Activated CD8-positive, alpha-beta T cell treated with anti-CD3 and anti-CD28 coated beads, Interleukin-2, amount 10 ng/mL, durations not matched to agents 7 days and 5 days (primary cell): ENCODE measurements at regions of chr5 and their contacts with region 1.

Region 1: DNA sequence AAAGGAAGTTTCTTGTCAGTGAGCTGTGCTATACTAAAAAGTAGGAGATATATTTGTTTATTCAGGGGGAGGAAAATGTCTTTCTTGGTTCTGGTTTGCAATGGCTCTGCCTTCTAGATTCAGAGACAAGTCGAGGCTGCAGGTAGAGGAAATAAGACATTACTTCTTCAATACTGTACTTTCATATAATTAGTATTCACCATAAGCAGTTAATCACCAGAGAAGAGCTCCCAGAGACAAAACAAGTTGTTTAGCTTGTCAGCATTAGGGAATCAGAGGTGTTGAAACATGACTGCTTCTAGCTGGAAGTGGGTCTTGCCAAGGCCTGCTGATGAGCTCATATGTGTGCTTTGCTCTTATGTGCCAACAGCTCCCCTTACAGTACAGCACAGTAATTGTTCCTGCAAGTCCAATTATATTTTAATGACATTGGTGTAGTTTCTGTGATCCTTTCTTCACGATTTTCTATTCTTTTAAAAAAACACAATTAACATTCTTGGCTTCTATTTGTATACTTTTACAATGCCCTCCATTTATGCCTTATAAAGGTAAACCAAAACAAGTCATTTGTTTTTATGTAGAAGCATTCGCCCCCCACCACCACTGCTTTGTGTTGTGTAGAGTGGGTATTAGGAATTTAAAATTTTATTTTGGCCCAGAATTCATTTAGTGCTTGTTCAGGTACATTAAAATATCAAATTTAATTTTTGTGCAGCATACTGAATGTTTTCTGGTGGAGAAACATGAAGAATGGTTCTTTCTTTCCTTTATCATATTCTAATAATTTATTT is 112.2 kb downstream of the RPS23 start:
- DNase-seq: peak; percentile 55
- ATAC-seq: peak; percentile 80
- H3K4me3 Mint-ChIP-seq: no peak overlapping the region
- H3K27ac Mint-ChIP-seq: no peak overlapping the region
- H3K4me1 Mint-ChIP-seq: no peaks in the 10 kb centered on the region
- H3K27me3 Mint-ChIP-seq: no peaks in the 10 kb centered on the region

Region 2: GRCh38 chr5:81425569-81425968 is 740.4 kb before region 1 on chr5:
- CTCF ChIA-PET with region 1: interaction called, 30 read pairs
- POLR2A ChIA-PET with region 1: no interaction called
- DNase-seq: no peak
- ATAC-seq: peak; percentile 47
- H3K4me3 Mint-ChIP-seq: no peak overlapping the region
- H3K27ac Mint-ChIP-seq: no peak overlapping the region
- H3K4me1 Mint-ChIP-seq: peaks cover 15% of the 10 kb centered on the region
- H3K27me3 Mint-ChIP-seq: no peaks in the 10 kb centered on the region

Region 3: GRCh38 chr5:81506900-81507588 is 658.9 kb before region 1 on chr5:
- CTCF ChIA-PET with region 1: interaction called, 26 read pairs
- POLR2A ChIA-PET with region 1: no interaction called
- DNase-seq: peak; percentile 63
- ATAC-seq: peak; percentile 93
- H3K4me3 Mint-ChIP-seq: no peak overlapping the region
- H3K27ac Mint-ChIP-seq: no peak overlapping the region
- H3K4me1 Mint-ChIP-seq: peaks cover 6% of the 10 kb centered on the region
- H3K27me3 Mint-ChIP-seq: no peaks in the 10 kb centered on the region

Region 4: DNA sequence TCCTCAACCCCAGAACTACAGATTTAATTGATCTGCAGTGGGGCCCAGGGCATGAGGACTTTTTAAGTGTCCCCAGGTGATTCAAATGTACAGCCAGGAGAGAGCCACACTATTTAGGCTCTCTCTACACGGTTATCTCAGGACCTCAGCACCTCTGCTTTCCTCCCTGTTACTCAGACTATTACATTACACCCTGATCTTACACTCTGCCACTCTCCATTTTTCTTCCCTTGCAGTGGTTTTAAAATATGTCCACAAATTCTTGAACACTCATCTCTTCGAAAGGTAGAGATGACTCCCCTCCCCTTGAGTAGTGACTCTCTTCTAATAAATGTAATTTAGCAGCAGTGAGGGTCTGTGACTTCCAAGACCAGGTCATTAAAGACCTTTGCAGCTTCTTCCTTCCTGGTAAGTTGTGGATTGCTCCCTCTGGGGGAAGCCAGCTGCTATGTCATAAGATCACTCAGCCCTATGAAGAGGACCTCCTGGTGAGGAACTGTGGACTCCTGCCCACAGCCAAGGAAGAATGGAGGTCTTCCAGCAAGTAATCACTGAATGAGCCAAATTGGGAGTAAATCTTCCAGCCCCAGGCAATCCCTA is 327.5 kb before region 1 on chr5:
- CTCF ChIA-PET with region 1: interaction called, 10 read pairs
- POLR2A ChIA-PET with region 1: no interaction called
- DNase-seq: peak; percentile 38
- ATAC-seq: peak; percentile 74
- H3K4me3 Mint-ChIP-seq: no peak overlapping the region
- H3K27ac Mint-ChIP-seq: no peak overlapping the region
- H3K4me1 Mint-ChIP-seq: no peaks in the 10 kb centered on the region
- H3K27me3 Mint-ChIP-seq: peaks cover 3% of the 10 kb centered on the region

Region 5: GRCh38 chr5:81994679-81995078 is 171.3 kb before region 1 on chr5:
- CTCF ChIA-PET with region 1: no interaction called
- POLR2A ChIA-PET with region 1: no interaction called
- DNase-seq: no peak
- ATAC-seq: no peak
- H3K4me3 Mint-ChIP-seq: no peak overlapping the region
- H3K27ac Mint-ChIP-seq: no peak overlapping the region
- H3K4me1 Mint-ChIP-seq: no peaks in the 10 kb centered on the region
- H3K27me3 Mint-ChIP-seq: no peaks in the 10 kb centered on the region